Heart left ventricle (tissue), 16 donors: ENCODE measurements at regions of chr14 and their contacts with region 1.

Region 1: DNA sequence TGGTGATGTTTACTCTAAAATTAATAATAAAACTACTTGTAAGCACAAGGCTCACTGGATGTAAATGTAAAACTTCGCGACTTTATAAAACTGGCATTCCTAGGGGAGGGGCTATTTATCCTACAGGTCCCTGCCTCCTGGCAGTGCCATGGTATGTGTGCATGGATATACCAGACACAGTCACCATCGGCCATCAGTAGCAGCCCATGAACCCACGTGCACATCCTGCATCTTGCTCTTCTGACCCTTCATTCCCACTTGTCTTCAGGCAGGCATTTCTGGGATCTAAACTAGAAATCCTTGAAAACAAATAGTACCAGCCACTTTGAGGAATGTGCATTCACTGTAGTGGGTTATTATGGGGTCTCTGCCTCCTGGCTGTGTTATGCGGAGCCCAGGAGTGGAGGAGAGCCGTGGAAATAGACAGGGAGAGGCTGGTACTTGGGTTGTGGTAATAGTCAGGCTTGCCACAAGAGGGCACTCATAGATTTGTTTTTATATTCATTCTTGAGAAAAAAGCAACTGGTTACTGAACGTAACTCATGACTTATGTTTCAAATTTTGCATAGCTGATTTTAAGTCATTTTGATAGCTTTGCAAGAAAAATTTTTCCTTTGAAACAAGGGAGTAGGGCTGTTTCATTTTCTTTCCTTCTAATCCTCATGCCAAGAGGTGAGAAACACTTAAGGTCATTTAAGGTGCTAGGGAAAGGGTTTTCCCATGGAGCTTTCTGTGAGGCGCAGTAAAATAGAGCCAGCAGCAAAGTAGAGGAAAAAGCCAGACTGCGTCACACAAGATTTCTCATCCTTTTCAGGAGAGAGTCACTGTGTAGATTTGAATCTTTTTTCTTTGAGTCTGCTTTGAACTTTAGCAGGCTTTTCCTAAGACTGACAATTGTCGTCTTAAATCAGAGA is 17.4 kb upstream of the GALNT16 start:
- DNase-seq: peak in 3 of 5 donors; percentile 56 to 62 (median 59)
- ATAC-seq: peak; percentile 53 to 71 (median 65)
- H3K4me3 ChIP-seq: no peak overlapping the region
- H3K27ac ChIP-seq: peak overlapping the region in 4 of 12 donors; percentile 8 to 25 (median 15)
- H3K4me1 ChIP-seq: peaks cover 0 to 32% (median 12%) of the 10 kb centered on the region in 12 donors
- H3K27me3 ChIP-seq: no peaks in the 10 kb centered on the region
- CTCF ChIP-seq: peak; percentile 68 to 86 (median 80)
- POLR2A ChIP-seq: no peak

Region 2: GRCh38 chr14:68862954-68863594 is 379.5 kb before region 1 on chr14:
- intact Hi-C with region 1: loop called in 1 of 10 experiments (anchors 10 kb)
- DNase-seq: peak in 4 of 5 donors; percentile 73 to 80 (median 76)
- ATAC-seq: peak; percentile 57 to 84 (median 79)
- H3K4me3 ChIP-seq: no peak overlapping the region
- H3K27ac ChIP-seq: no peak overlapping the region
- H3K4me1 ChIP-seq: no peaks in the 10 kb centered on the region
- H3K27me3 ChIP-seq: no peaks in the 10 kb centered on the region
- CTCF ChIP-seq: peak; percentile 61 to 82 (median 73)
- POLR2A ChIP-seq: no peak

Region 3: GRCh38 chr14:69153131-69153872 is 89.3 kb before region 1 on chr14:
- intact Hi-C with region 1: loop called in 1 of 10 experiments (anchors 5 kb)
- DNase-seq: peak; percentile 94 to 97 (median 96)
- ATAC-seq: peak; percentile 92 to 96 (median 94)
- H3K4me3 ChIP-seq: peak overlapping the region; percentile 74 to 97 (median 90)
- H3K27ac ChIP-seq: peak overlapping the region; percentile 80 to 99 (median 96)
- H3K4me1 ChIP-seq: peaks cover 9 to 41% (median 27%) of the 10 kb centered on the region in 12 donors
- H3K27me3 ChIP-seq: no peaks in the 10 kb centered on the region
- CTCF ChIP-seq: no peak
- POLR2A ChIP-seq: peak; percentile 26 to 76

Region 4: GRCh38 chr14:69315301-69315700 is 72.7 kb after region 1 on chr14:
- intact Hi-C with region 1: no loop called
- DNase-seq: peak in 3 of 5 donors; percentile 17 to 40 (median 19)
- ATAC-seq: peak in 1 of 4 donors; percentile 15
- H3K4me3 ChIP-seq: no peak overlapping the region
- H3K27ac ChIP-seq: peak overlapping the region in 7 of 12 donors; percentile 24 to 81 (median 36)
- H3K4me1 ChIP-seq: peaks cover 4 to 56% (median 33%) of the 10 kb centered on the region in 12 donors
- H3K27me3 ChIP-seq: no peaks in the 10 kb centered on the region
- CTCF ChIP-seq: no peak
- POLR2A ChIP-seq: no peak

Region 5: GRCh38 chr14:69346710-69347109 is 104.1 kb after region 1 on chr14:
- intact Hi-C with region 1: loop called in 1 of 10 experiments (anchors 5 kb)
- DNase-seq: peak in 2 of 5 donors; percentile 52 to 71
- ATAC-seq: peak in 2 of 4 donors; percentile 14 to 32
- H3K4me3 ChIP-seq: no peak overlapping the region
- H3K27ac ChIP-seq: no peak overlapping the region
- H3K4me1 ChIP-seq: peaks cover 0 to 9% (median 5%) of the 10 kb centered on the region in 12 donors
- H3K27me3 ChIP-seq: no peaks in the 10 kb centered on the region
- CTCF ChIP-seq: peak; percentile 27 to 61 (median 50)
- POLR2A ChIP-seq: no peak

Region 6: DNA sequence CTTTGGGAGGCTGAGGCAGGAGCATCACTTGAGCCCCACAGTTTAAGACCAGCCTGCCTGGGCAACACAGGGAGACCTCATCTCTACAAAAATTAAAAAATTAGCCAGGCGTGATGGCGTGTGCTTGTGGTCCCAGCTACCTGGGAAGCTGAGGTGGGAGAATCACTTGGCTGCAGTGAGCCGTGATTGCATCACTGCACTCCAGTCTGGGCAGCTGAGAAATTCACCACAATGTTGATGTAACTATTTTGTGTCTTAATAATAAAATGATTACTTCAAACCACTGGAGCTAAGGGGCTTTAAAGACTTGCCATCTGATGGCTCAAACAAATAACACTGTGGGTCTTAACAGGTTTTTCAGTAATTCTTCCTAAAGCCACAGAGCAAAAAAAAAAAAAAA is 144.7 kb after region 1 on chr14:
- intact Hi-C with region 1: no loop called
- DNase-seq: no peak
- ATAC-seq: no peak
- H3K4me3 ChIP-seq: no peak overlapping the region
- H3K27ac ChIP-seq: no peak overlapping the region
- H3K4me1 ChIP-seq: peaks cover 0 to 18% (median 10%) of the 10 kb centered on the region in 12 donors
- H3K27me3 ChIP-seq: no peaks in the 10 kb centered on the region
- CTCF ChIP-seq: no peak
- POLR2A ChIP-seq: no peak

Region 7: DNA sequence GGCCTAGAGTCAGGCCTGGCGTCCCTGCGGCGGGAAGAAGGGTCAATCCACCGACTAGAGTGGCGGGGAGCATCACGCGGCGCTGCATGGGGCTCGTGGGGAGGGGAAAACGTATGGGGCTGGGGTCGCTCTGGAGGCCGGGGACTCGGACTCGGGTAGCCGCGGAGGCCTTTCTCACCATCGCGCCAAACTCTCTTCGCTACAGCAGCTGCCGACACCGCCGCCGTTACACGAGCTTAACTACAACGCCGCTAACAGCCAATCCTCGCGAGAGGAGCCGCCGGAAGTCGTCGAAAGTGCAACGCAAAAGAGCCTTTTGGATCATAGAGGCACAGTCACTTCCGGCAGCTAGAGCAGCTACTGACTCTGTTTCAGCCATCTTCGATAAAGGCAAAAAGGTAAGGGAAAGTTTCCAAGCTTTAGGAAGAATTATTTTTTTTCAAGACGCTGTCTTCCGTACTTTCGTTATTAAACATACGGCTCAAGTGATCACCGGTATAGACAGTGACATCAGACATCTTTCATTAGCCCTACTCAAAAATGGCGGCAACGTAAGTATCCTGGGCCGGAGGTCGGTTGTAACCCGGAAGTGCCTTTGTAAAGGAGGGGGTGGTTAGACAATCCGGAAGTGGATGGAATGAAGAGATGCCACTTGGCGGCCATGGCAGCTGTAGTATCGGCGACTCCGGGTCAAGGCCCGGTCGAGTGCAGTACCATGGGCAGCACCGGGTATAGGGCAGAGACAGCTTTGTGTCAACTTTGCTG is 155.7 kb after region 1 on chr14 and contains the starts of genes ERH and SLC39A9:
- intact Hi-C with region 1: loop called in 1 of 10 experiments (anchors 2 kb)
- DNase-seq: peak; percentile 96 to 97 (median 97)
- ATAC-seq: peak; percentile 97 to 98 (median 98)
- H3K4me3 ChIP-seq: peak within 1 kb of the TSS; percentile 52 to 95 (median 80)
- H3K27ac ChIP-seq: peak within 1 kb of the TSS; percentile 81 to 97 (median 90)
- H3K4me1 ChIP-seq: peaks cover 10 to 63% (median 45%) of the 10 kb centered on the region in 12 donors
- H3K27me3 ChIP-seq: no peaks in the 10 kb centered on the region
- CTCF ChIP-seq: peak in 1 of 12 donors; percentile 8
- POLR2A ChIP-seq: peak in 1 of 2 donors; percentile 41
- total RNA-seq, gene ERH: 44.3 to 147 (median 128) TPM
- total RNA-seq, gene SLC39A9: 16.9 to 37.5 (median 25.5) TPM

Region 8: DNA sequence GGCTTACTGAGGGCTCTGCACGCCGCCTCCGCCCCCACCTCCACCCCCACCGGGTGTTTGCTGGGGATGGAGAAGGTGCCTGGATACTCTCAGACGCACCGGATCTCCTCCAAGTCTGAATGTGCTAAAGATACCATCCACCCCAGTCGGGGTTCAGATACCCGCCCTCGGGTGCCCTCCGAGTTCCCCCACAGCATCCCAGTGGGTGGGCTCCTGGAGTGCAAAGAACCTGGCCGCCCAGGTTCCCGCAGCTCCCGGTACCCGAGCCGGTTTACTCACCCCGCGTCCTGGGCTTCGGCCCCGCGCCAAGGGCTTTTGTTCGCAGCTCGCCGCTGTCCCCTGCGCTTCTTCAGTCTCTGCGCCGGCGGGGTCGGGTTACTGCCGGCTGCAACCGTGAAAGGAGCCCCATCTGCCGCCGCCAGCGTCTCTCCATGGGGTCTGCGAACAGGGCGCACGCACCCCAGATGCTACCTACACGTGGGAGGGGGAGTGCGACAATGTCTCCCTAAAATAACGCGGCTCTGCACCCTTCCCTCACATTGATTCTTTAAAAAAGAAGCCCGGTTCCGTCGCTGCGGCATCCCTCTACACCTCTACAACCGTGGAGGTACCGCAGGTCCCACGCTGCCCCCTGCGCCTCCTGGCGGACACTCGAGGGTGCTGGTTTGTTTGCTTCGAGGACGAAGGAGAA is 331.8 kb after region 1 on chr14 and contains the start of gene CCDC177:
- intact Hi-C with region 1: loop called in 2 of 10 experiments (anchors 10 kb)
- DNase-seq: peak in 2 of 5 donors; percentile 34 to 77
- ATAC-seq: peak in 3 of 4 donors; percentile 27 to 52 (median 52)
- H3K4me3 ChIP-seq: peak within 1 kb of the TSS in 9 of 12 donors; percentile 1 to 38 (median 22)
- H3K27ac ChIP-seq: no peak within 1 kb of the TSS
- H3K4me1 ChIP-seq: peaks cover 10 to 36% (median 28%) of the 10 kb centered on the region in 12 donors
- H3K27me3 ChIP-seq: peaks cover 41 to 86% (median 71%) of the 10 kb centered on the region in 9 donors
- CTCF ChIP-seq: peak; percentile 62 to 90 (median 79)
- POLR2A ChIP-seq: no peak
- total RNA-seq, gene CCDC177: not detected